Head of caudate nucleus (tissue), 42 donors: ENCODE measurements at regions of chr9 and their contacts with region 1.

Region 1: DNA sequence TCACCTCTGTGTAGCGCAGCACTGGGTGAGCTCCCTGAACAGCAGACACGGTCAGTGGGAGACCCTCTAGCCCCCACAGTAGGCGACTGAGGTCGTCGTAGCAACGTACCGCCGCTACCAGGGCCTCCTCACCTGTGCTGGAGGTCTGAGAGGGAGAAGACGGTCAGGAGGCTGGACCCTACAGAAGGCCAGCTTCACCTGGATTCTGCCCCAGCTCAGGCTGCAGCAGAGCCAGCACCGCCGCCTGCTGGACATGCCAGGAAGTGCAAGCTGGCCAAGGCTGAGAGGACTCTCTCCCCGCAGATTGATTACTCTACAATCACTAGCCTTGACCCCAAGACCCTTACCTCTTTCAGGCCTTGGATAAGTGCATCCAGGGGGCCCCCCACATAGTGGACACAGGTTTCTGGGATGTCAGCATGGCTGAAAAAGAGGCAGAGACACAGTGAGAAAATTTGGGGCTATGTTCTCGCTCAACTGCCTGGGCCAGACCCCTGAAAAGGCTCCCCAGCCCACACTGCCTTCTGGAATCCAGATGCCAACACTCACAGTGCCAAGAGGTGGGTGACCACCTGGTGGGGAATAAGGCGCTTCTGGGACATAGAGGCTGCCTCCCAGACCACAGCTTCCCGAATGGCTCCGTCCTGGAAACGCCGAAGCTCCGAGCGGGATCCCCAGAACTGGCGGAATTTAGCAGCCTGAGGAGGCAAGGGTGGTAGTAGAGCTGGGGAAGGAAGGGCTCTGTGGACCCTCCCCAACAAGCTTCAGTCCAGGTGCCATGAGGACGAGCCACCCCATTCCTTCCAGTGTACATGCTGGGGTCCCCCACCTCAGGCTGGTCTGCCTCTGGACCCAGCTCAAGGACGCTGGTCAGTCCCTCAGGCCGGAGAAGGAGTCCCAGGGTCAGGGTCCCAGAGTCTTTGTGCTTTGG is 6.9 kb downstream of the NOL6 start:
- DNase-seq: peak in 41 of 42 donors; percentile 30 to 86 (median 64)

Region 2: DNA sequence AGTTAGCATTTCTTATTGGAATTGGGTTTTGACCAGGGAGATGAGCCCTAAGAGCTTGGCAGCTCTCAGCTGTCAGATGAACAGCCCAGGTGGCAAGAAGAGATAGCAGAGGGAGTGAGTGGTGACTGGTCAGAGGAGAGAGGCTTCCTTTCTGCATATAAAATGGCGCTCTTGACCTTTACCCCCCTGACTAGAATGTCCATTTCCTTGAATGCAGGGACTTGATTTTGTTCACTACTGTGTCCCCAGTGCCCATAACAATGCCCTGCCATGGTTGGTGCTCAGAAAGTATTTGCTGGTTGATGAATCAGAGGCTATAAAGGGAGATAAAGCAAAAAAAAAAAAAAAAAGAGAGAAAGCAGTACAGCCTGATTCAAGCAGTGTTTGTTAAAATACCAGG is 194.8 kb before region 1 on chr9:
- intact Hi-C with region 1: loop called (anchors 10 kb)
- DNase-seq: no peak

Region 3: GRCh38 chr9:33374634-33375213 is 92.1 kb before region 1 on chr9:
- intact Hi-C with region 1: loop called (anchors 5 kb)
- DNase-seq: peak; percentile 51 to 92 (median 78)

Region 4: GRCh38 chr9:33415501-33416038 is 51.3 kb before region 1 on chr9:
- intact Hi-C with region 1: no loop called
- DNase-seq: peak in 40 of 42 donors; percentile 25 to 83 (median 54)